ENCODE measurements at regions of chr1 and their contacts with region 1.

Region 1: DNA sequence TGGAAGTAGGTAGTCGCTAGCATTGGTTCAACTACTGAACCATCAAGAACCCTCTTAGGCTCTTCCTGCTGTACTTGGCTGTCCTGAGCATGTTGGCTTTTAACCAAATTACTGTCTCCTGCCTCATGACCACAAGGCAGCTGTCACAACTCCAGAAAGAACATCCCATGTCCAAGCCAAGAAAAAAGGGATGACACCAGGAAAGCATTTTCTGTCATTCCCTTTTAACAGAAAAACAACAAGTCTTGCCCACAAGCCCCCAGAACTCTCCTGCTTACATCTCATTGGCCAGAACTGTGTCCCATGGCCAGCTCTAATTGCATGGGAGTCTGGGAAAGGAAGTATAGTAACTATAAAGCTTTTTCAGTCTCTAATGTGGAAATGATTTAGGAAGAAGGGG is 2.4 kb upstream of the RNU5D-1 start:
- DNase-seq: no peak
- ATAC-seq: peak; percentile 52 to 63 (median 58)
- H3K4me3 ChIP-seq: no peak overlapping the region
- H3K27ac ChIP-seq: peak overlapping the region; percentile 54
- H3K4me1 ChIP-seq: peaks cover 10% of the 10 kb centered on the region
- H3K27me3 ChIP-seq: no peaks in the 10 kb centered on the region
- CTCF ChIP-seq: no peak

Region 2: DNA sequence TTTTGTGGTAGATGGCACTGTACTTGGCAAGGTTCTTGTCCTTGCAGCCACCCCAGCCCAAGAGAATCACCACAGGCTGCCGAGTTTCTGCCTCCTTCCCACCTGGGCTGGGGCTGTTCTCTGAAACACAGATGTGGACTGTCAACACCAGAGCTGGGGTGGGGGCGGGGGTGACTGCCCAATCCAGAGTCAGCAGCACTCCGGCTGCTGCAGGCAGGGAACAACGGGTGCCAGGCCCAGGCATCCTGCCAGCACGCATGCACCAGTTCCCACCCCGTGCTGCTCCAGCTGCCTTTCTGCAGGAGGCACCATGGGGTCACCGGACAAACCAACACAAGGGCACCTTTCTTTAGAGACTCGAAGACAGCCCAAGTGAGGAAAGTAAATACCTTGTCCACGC is 73.2 kb before region 1 on chr1:
- intact Hi-C with region 1: no loop called
- DNase-seq: peak; percentile 40 to 74
- ATAC-seq: peak; percentile 74 to 85 (median 80)
- H3K4me3 ChIP-seq: no peak overlapping the region
- H3K27ac ChIP-seq: no peak overlapping the region
- H3K4me1 ChIP-seq: no peaks in the 10 kb centered on the region
- H3K27me3 ChIP-seq: no peaks in the 10 kb centered on the region
- CTCF ChIP-seq: no peak

Region 3: DNA sequence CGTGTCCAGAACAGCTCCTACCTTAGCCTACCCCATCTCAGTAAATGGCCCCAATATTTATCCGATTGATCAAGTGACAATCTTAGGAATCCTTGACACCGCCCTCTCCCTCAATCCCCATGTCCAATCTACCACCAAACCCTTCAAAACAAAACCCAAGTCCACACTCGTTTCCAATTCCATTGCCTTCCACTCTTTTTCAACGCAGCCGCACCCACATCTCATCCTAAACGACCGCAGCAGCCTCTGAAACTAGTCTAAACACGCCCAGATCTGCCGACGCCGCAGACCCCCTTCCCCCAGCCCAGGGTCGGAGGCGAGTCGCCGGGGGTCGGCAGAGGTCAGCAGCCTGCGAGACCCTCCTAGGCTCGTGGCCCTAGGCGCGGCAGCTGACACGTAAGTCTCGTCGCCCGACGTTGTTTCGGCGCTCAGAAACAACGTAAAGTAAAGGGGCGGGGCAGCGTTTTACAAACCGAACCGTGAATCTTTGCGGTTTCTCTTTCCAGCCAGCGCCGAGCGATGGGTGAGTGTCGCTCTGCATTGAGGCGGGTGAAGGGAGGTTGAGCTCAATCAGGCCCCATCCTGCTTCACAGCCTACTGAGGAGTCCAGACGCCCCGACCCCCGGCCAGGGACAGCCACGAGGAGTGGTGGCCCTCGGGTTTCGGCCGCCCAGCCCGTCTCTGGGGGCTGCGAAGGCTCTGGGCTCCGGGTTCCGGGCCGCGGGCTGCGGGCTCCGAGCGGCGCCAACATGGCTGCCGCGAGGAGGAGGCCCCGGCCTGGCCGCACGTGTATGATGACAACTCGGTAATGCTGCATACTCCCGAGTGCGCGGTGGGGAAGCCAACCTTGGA is 41.9 kb after region 1 on chr1 and contains the start of gene RPS8:
- intact Hi-C with region 1: loop called in 1 of 2 experiments (anchors 2 kb)
- DNase-seq: peak; percentile 92 to 95
- ATAC-seq: peak; percentile 89 to 91 (median 90)
- H3K4me3 ChIP-seq: peak within 1 kb of the TSS; percentile 98
- H3K27ac ChIP-seq: peak within 1 kb of the TSS; percentile 98
- H3K4me1 ChIP-seq: peaks cover 10% of the 10 kb centered on the region
- H3K27me3 ChIP-seq: no peaks in the 10 kb centered on the region
- CTCF ChIP-seq: no peak
- total RNA-seq, gene RPS8: 935 to 1,269 (median 1,066) TPM